ENCODE measurements at regions of chr16 and their contacts with region 1.

Region 1: GRCh38 chr16:85010931-85011845 is at the start of gene ZDHHC7:
- DNase-seq: peak; percentile 76 to 87 (median 85)
- ATAC-seq: peak; percentile 96
- H3K4me3 ChIP-seq: peak within 1 kb of the TSS; percentile 99
- H3K4me3 Mint-ChIP-seq: peak within 1 kb of the TSS; percentile 94 to 100 (median 98)
- H3K27ac ChIP-seq: peak within 1 kb of the TSS; percentile 92
- H3K27ac Mint-ChIP-seq: peak within 1 kb of the TSS; percentile 95 to 100 (median 99)
- H3K4me1 ChIP-seq: peaks cover 14 to 16% of the 10 kb centered on the region in 2 donors
- H3K4me1 Mint-ChIP-seq: peaks cover 27 to 59% (median 43%) of the 10 kb centered on the region in 7 donors
- H3K27me3 ChIP-seq: no peaks in the 10 kb centered on the region
- H3K27me3 Mint-ChIP-seq: peaks cover 0 to 5% (median 0%) of the 10 kb centered on the region in 5 donors
- total RNA-seq, gene ZDHHC7: 31.7 to 62.2 (median 33.4) TPM

Region 2: GRCh38 chr16:84699712-84700445 is 311.3 kb before region 1 on chr16 and contains the start of gene USP10:
- CTCF ChIA-PET with region 1: no interaction called
- POLR2A ChIA-PET with region 1: no interaction called
- intact Hi-C with region 1: loop called in 1 of 2 experiments (anchors 5 kb)
- DNase-seq: peak; percentile 75 to 93 (median 88)
- ATAC-seq: peak; percentile 91
- H3K4me3 ChIP-seq: peak within 1 kb of the TSS; percentile 61
- H3K4me3 Mint-ChIP-seq: peak within 1 kb of the TSS; percentile 92 to 99 (median 98)
- H3K27ac ChIP-seq: peak within 1 kb of the TSS; percentile 87
- H3K27ac Mint-ChIP-seq: peak within 1 kb of the TSS; percentile 92 to 99 (median 96)
- H3K4me1 ChIP-seq: peaks cover 11 to 22% of the 10 kb centered on the region in 2 donors
- H3K4me1 Mint-ChIP-seq: peaks cover 19 to 46% (median 42%) of the 10 kb centered on the region in 7 donors
- H3K27me3 ChIP-seq: no peaks in the 10 kb centered on the region
- H3K27me3 Mint-ChIP-seq: peaks cover 0 to 4% (median 0%) of the 10 kb centered on the region in 5 donors
- total RNA-seq, gene USP10: 88.4 to 113 (median 112) TPM

Region 3: DNA sequence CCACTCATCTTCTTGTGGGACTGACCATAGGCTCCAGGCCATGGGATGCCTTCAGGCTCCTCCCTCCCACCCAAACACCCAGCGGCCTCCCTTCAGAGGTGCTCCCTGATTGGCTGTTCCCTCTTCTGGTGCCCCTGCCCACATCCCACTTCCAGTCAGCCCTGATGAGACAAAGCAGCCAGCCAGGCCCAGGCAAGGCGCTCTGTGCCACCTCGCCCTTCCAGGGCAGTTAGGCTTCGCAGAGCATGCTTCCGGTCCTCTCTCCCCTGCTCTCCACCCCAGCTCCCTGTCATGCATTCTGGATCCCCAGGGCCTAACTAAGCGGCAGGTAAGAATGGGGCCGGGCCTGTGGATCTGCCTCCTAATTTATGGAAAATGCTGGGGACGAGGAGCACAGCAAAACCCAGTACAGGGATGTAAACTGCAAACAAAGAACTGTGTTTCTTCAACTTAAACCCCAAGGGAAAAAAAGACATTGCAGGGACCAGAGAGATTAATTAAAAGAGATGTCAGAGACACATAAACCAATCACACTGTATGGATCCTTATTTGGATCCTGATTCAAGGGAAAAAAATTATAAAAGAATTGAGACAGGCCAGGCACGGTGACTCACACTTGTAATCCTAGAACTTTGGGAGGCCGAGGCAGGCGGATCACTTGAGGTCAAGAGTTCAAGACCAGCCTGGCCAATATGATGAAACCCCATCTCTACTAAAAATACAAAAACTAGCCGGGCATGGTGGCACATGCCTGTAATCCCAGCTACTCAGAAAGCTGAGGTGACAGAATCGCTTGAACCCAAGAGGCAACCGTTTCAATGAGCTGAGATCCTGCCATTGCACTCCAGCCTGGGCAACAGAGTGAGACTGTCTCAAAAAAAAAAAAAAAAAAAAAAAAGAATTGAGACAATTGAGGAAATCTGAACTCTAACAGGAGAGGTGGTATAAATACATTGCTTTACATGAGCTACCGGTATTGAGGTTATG is 25.8 kb before region 1 on chr16:
- CTCF ChIA-PET with region 1: no interaction called
- POLR2A ChIA-PET with region 1: no interaction called
- intact Hi-C with region 1: no loop called
- DNase-seq: no peak
- ATAC-seq: no peak
- H3K4me3 ChIP-seq: no peak overlapping the region
- H3K4me3 Mint-ChIP-seq: no peak overlapping the region
- H3K27ac ChIP-seq: no peak overlapping the region
- H3K27ac Mint-ChIP-seq: peak overlapping the region in 2 of 9 donors; percentile 54 to 65
- H3K4me1 ChIP-seq: no peaks in the 10 kb centered on the region
- H3K4me1 Mint-ChIP-seq: peaks cover 5 to 22% (median 13%) of the 10 kb centered on the region in 7 donors
- H3K27me3 ChIP-seq: no peaks in the 10 kb centered on the region
- H3K27me3 Mint-ChIP-seq: no peaks in the 10 kb centered on the region

Region 4: GRCh38 chr16:85055503-85056210 is 44.5 kb after region 1 on chr16:
- CTCF ChIA-PET with region 1: no interaction called
- POLR2A ChIA-PET with region 1: interaction called, 9 read pairs
- intact Hi-C with region 1: loop called (anchors 1 kb)
- DNase-seq: peak; percentile 29 to 90 (median 70)
- ATAC-seq: peak; percentile 96
- H3K4me3 ChIP-seq: peak overlapping the region; percentile 19
- H3K4me3 Mint-ChIP-seq: peak overlapping the region; percentile 76 to 90 (median 84)
- H3K27ac ChIP-seq: peak overlapping the region; percentile 72
- H3K27ac Mint-ChIP-seq: peak overlapping the region; percentile 91 to 99 (median 96)
- H3K4me1 ChIP-seq: peaks cover 25 to 37% of the 10 kb centered on the region in 2 donors
- H3K4me1 Mint-ChIP-seq: peaks cover 32 to 58% (median 37%) of the 10 kb centered on the region in 7 donors
- H3K27me3 ChIP-seq: no peaks in the 10 kb centered on the region
- H3K27me3 Mint-ChIP-seq: no peaks in the 10 kb centered on the region

Region 5: GRCh38 chr16:85086347-85087291 is 75.4 kb after region 1 on chr16:
- CTCF ChIA-PET with region 1: interaction called, 11 read pairs
- POLR2A ChIA-PET with region 1: interaction called, 4 read pairs
- intact Hi-C with region 1: loop called (anchors 1 to 2 kb)
- DNase-seq: peak; percentile 44 to 78 (median 74)
- ATAC-seq: peak; percentile 88
- H3K4me3 ChIP-seq: no peak overlapping the region
- H3K4me3 Mint-ChIP-seq: no peak overlapping the region
- H3K27ac ChIP-seq: no peak overlapping the region
- H3K27ac Mint-ChIP-seq: peak overlapping the region in 3 of 9 donors; percentile 23 to 59 (median 43)
- H3K4me1 ChIP-seq: no peaks in the 10 kb centered on the region
- H3K4me1 Mint-ChIP-seq: peaks cover 6 to 31% (median 15%) of the 10 kb centered on the region in 7 donors
- H3K27me3 ChIP-seq: no peaks in the 10 kb centered on the region
- H3K27me3 Mint-ChIP-seq: peaks cover 0 to 2% (median 0%) of the 10 kb centered on the region in 5 donors

Measured in naive thymus-derived CD4-positive, alpha-beta T cell (primary cell).